Endothelial cell of umbilical vein (primary cell): ENCODE measurements at regions of chr6 and their contacts with region 1.

Region 1: GRCh38 chr6:73739096-73739495 is 43.1 kb downstream of the CD109 start:
- DNase-seq: peak; percentile 79
- H3K4me3 ChIP-seq: no peak overlapping the region
- H3K27ac ChIP-seq: no peak overlapping the region
- H3K4me1 ChIP-seq: no peaks in the 10 kb centered on the region
- H3K27me3 ChIP-seq: no peaks in the 10 kb centered on the region
- CTCF ChIP-seq: peak; percentile 43 to 56
- POLR2A ChIP-seq: no peak

Region 2: GRCh38 chr6:73790574-73790973 is 51.5 kb after region 1 on chr6:
- CTCF ChIA-PET with region 1: interaction called, 11 read pairs
- POLR2A ChIA-PET with region 1: no interaction called
- dilution Hi-C with region 1: no loop called
- intact Hi-C with region 1: no loop called
- DNase-seq: no peak
- H3K4me3 ChIP-seq: no peak overlapping the region
- H3K27ac ChIP-seq: no peak overlapping the region
- H3K4me1 ChIP-seq: peaks cover 18% of the 10 kb centered on the region
- H3K27me3 ChIP-seq: no peaks in the 10 kb centered on the region
- CTCF ChIP-seq: no peak
- POLR2A ChIP-seq: no peak

Region 3: DNA sequence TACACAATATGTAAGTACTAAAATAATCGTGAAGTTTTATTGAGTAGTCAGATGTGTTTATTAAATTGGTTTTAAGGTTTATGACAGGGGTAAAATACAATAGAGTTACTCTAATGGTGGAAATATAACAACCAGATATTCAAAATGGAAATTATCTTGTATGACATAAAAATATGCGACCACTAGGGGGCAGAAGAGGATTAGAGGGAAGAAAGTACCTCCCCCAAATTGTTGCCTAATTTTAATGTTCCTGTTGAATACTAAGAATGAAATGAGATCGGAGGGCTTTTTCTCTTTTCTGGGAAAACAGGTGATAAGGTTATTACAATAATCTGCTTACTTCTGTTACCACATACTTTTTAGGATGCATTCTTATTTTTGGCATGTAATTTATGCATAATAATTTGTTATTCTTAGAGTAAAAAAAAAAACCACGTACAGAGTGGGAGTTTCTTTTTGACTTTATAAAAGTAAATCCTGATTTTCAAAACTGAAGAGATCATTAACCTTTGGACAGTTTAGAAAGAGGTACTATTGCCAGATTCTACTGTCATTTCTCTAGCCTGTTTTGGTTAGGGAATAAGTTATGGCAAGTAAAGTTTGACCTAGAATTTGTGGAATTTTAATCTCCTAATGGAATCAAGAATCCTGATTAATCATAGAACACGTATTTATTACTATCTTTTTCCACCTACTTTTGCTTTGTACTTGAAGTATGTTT is 116.1 kb after region 1 on chr6:
- CTCF ChIA-PET with region 1: interaction called, 16 read pairs
- POLR2A ChIA-PET with region 1: interaction called, 3 read pairs
- dilution Hi-C with region 1: no loop called
- intact Hi-C with region 1: loop called (anchors 1 kb)
- DNase-seq: peak; percentile 50
- H3K4me3 ChIP-seq: no peak overlapping the region
- H3K27ac ChIP-seq: no peak overlapping the region
- H3K4me1 ChIP-seq: no peaks in the 10 kb centered on the region
- H3K27me3 ChIP-seq: no peaks in the 10 kb centered on the region
- CTCF ChIP-seq: peak; percentile 41 to 46
- POLR2A ChIP-seq: no peak

Region 4: GRCh38 chr6:74091136-74091793 is 352.2 kb after region 1 on chr6:
- CTCF ChIA-PET with region 1: interaction called, 6 read pairs
- POLR2A ChIA-PET with region 1: no interaction called
- dilution Hi-C with region 1: no loop called
- intact Hi-C with region 1: loop called (anchors 5 kb)
- DNase-seq: peak; percentile 57
- H3K4me3 ChIP-seq: no peak overlapping the region
- H3K27ac ChIP-seq: no peak overlapping the region
- H3K4me1 ChIP-seq: no peaks in the 10 kb centered on the region
- H3K27me3 ChIP-seq: no peaks in the 10 kb centered on the region
- CTCF ChIP-seq: peak; percentile 46 to 55
- POLR2A ChIP-seq: no peak